H1 (cell line): ENCODE measurements at regions of chr10 and their contacts with region 1.

Region 1: DNA sequence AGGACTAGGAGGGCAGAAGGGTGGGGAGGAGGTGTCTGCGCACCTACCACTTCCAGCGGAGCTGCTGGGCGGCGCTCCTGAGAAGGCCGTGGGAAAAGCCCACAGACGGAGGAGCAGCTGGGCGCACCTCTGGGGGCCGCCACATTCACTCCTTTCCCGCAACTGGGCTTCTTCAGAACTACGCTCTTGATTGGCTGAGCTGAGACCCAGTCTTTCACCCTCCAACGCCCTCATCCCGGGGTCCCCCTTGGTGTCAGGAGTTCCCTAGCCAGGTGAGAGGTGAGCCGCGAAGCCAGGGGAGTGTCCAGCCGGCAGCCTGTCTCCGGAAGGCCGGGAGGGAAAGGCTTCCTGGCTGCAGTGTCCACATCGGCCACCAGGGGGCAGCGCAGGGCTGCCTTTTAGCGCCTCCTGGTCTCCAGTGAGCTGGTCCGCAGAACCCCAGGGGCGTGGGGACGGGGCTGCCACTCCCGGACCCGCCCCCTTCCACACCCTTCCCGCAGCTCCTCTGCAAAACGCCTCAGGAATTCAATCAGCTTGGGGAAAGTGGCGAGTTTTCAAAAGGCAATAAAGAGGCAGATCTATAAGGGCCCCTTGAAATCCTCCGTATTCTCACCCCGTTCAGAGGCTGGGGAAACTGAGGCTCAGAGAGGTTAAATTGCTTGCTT is 98.8 kb downstream of the CHST15 start:
- DNase-seq: peak; percentile 82 to 100
- H3K4me3 ChIP-seq: peak overlapping the region; percentile 8 to 59 (median 41); a peak in 7 of 8 replicates
- H3K27ac ChIP-seq: no peak overlapping the region
- H3K4me1 ChIP-seq: peaks cover 0 to 12% (median 3%) of the 10 kb centered on the region in 4 experiments; a peak in 5 of 7 replicates
- H3K27me3 ChIP-seq: peaks cover 0 to 14% (median 10%) of the 10 kb centered on the region in 4 experiments; a peak in 6 of 7 replicates
- CTCF ChIP-seq: peak; percentile 95 to 97 (median 96)
- EP300 ChIP-seq: peak in 1 of 2 experiments; percentile 25; a peak in 1 of 3 replicates
- POLR2A ChIP-seq: no peak
- RAD21 ChIP-seq: peak; percentile 94 to 95

Region 2: GRCh38 chr10:124019886-124020797 is 25.6 kb after region 1 on chr10:
- CTCF ChIA-PET with region 1: interaction called, 20 read pairs
- POLR2A ChIA-PET with region 1: interaction called, 3 read pairs
- DNase-seq: peak; percentile 44 to 59
- H3K4me3 ChIP-seq: peak overlapping the region in 1 of 4 experiments; percentile 39; a peak in 3 of 8 replicates
- H3K27ac ChIP-seq: peak overlapping the region; percentile 39; the same call in 1 of the 2 replicates
- H3K4me1 ChIP-seq: peaks cover 16 to 48% (median 32%) of the 10 kb centered on the region in 4 experiments
- H3K27me3 ChIP-seq: no peaks in the 10 kb centered on the region
- CTCF ChIP-seq: no peak
- EP300 ChIP-seq: no peak
- POLR2A ChIP-seq: no peak
- RAD21 ChIP-seq: peak in 1 of 2 experiments; percentile 10; a peak in 3 of 4 replicates

Region 3: DNA sequence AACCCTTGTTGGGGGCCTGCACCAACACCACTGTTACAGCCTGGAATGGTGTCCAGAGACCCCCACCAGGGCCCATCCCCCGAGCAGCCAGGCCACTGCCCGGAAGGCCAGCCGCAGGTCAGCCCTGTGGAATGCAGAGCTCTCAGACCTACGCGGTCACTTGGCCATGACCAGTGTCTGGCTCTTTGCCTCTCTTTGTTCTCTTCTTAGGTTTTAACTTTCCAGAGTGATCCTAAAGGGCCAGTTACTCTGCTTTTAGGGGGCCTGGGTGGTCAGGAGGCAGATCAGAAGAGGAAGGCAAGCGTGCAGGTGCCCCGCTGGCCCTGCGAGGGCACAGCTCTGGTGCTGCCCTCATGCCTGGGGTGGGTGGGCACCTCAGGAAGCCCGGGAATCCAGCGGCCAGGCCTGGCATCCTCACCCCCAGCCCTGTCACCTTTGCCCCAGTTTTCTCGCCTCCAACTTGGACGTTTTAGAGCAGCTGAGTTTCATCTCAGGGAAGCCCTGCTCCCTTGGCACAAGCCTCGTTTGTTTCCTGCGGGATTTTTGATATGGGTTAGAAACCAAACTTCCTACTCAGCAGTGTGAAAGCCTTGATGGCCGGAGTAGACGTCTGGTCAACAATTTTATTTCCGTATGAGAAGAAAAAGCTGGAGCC is 161.4 kb after region 1 on chr10:
- CTCF ChIA-PET with region 1: interaction called, 34 read pairs
- POLR2A ChIA-PET with region 1: no interaction called
- DNase-seq: no peak
- H3K4me3 ChIP-seq: no peak overlapping the region
- H3K27ac ChIP-seq: no peak overlapping the region
- H3K4me1 ChIP-seq: peaks cover 0 to 16% (median 9%) of the 10 kb centered on the region in 4 experiments; a peak in 6 of 7 replicates
- H3K27me3 ChIP-seq: no peaks in the 10 kb centered on the region
- CTCF ChIP-seq: no peak
- EP300 ChIP-seq: no peak
- POLR2A ChIP-seq: no peak
- RAD21 ChIP-seq: no peak

Region 4: DNA sequence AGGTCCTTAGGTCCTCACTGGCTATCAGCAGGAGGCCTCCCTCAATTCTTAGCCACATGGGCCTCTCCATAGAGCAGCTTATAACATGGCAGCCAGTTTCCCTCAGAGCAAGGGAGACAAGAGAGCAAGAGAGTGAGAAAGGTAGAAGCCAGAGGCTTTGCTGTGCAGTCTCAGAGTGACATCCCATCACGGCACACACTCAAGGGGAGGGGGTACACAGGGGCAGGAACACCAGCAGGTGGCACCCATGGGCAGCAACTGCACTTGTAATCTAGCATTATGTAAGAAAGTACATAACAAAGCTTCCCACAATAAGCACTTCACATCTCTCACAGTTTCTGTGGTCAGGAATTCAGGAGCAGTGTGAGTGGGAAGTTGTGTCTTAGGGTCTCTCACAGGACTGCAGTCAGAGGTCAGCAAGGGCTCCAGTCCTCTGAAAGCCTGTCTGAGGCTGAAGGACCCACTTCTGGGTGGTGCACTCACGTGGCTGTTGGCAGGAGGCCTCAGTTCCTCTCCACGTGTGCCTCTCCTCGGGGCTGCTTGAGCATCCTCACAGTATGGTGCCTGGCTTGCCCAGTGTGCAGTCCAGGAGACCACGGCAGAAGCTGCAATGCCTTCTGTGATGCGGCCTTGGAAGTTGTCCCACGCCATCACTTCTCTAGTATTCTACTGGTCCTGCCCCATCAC is 264.7 kb after region 1 on chr10:
- CTCF ChIA-PET with region 1: interaction called, 29 read pairs
- POLR2A ChIA-PET with region 1: no interaction called
- DNase-seq: no peak
- H3K4me3 ChIP-seq: no peak overlapping the region
- H3K27ac ChIP-seq: no peak overlapping the region
- H3K4me1 ChIP-seq: no peaks in the 10 kb centered on the region
- H3K27me3 ChIP-seq: 0 out of 7 replicates have a peak, but pooled peaks cover 0 to 2% (median 0%) of the 10 kb centered on the region in 4 experiments
- CTCF ChIP-seq: peak; percentile 48 to 61 (median 52)
- EP300 ChIP-seq: no peak
- POLR2A ChIP-seq: no peak
- RAD21 ChIP-seq: peak; percentile 50 to 65

Region 5: GRCh38 chr10:124364633-124365032 is 370.1 kb after region 1 on chr10:
- CTCF ChIA-PET with region 1: interaction called, 18 read pairs
- POLR2A ChIA-PET with region 1: no interaction called
- DNase-seq: no peak
- H3K4me3 ChIP-seq: no peak overlapping the region
- H3K27ac ChIP-seq: no peak overlapping the region
- H3K4me1 ChIP-seq: peaks cover 0 to 7% (median 3%) of the 10 kb centered on the region in 4 experiments; a peak in 4 of 7 replicates
- H3K27me3 ChIP-seq: no peaks in the 10 kb centered on the region
- CTCF ChIP-seq: no peak
- EP300 ChIP-seq: no peak
- POLR2A ChIP-seq: no peak
- RAD21 ChIP-seq: no peak

Region 6: DNA sequence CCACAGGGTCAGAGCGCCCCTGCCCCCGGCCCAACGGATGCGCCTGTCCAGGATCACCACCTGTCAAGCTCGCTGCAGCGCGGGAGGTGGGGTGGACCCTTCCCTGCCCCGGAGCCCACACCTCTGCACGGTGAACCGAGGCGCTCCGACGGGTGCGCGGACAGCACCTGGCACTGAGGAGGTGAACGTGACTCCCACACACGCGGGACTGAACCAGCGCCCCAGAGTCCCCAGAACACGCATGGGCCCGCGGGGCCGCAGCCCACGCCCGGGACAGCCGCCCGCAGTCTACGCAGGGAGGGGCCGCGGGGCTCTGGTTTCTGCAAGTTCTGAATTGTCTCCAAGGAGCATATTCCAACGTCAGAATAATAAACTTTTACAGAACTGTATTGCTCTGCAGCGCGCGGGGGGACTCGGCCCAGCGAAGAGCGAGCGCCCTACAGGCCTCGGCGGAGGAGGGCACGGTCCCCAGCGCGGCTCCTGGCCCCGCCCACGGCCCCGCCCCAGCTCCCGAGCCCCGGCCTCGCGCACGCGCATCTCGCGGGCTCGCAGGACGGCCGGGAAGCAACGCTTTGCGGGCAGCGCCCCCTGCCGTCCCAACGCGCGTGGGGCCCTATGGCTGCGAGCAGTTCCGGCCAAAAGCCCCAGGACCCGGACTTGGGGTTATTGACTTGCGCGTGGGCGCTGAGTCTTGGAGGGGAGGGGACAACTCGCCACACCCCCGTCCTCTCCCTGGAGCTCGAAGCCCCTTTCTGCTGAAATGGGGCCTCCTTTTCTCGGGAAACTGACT is 394.5 kb after region 1 on chr10:
- CTCF ChIA-PET with region 1: interaction called, 79 read pairs
- POLR2A ChIA-PET with region 1: no interaction called
- DNase-seq: peak; percentile 47 to 98
- H3K4me3 ChIP-seq: peak overlapping the region in 3 of 4 experiments; percentile 35 to 61 (median 38); a peak in 6 of 8 replicates
- H3K27ac ChIP-seq: no peak overlapping the region
- H3K4me1 ChIP-seq: peaks cover 0 to 8% (median 4%) of the 10 kb centered on the region in 4 experiments; a peak in 5 of 7 replicates
- H3K27me3 ChIP-seq: peaks cover 0 to 6% (median 5%) of the 10 kb centered on the region in 4 experiments; a peak in 5 of 7 replicates
- CTCF ChIP-seq: peak; percentile 86 to 94 (median 92)
- EP300 ChIP-seq: no peak
- POLR2A ChIP-seq: no peak
- RAD21 ChIP-seq: peak; percentile 95 to 97